ENCODE measurements at regions of chr3 and their contacts with region 1.

Region 1: DNA sequence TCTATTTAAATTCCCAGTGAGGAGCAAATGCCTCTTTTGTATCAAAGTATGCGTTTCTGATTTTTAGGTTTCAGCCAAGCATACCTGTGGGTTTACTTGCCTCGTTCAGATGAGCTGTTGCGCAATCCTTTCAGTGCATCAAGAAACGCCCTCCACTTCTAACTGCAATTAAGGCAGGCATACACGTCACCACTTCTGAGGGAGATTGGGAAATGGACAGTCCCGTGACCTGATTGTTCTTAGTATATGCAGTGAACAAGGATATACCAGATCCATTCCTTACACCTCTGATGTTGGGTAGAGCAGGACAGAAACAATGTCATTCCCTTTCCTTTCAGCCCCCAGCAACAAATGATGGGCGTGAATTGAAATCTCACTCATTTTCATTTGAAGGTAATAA is 219.0 kb downstream of the ITPR1 start:
- DNase-seq: no peak
- H3K4me3 ChIP-seq: no peak overlapping the region
- H3K4me3 Mint-ChIP-seq: no peak overlapping the region
- H3K27ac ChIP-seq: no peak overlapping the region
- H3K27ac Mint-ChIP-seq: no peak overlapping the region
- H3K4me1 ChIP-seq: no peaks in the 10 kb centered on the region
- H3K4me1 Mint-ChIP-seq: peaks cover 0 to 5% (median under 1%) of the 10 kb centered on the region in 4 donors
- H3K27me3 ChIP-seq: no peaks in the 10 kb centered on the region
- H3K27me3 Mint-ChIP-seq: no peaks in the 10 kb centered on the region

Region 2: GRCh38 chr3:4601892-4602291 is 110.3 kb before region 1 on chr3:
- CTCF ChIA-PET with region 1: no interaction called
- POLR2A ChIA-PET with region 1: no interaction called
- intact Hi-C with region 1: no loop called
- DNase-seq: no peak
- H3K4me3 ChIP-seq: no peak overlapping the region
- H3K4me3 Mint-ChIP-seq: no peak overlapping the region
- H3K27ac ChIP-seq: no peak overlapping the region
- H3K27ac Mint-ChIP-seq: no peak overlapping the region
- H3K4me1 ChIP-seq: no peaks in the 10 kb centered on the region
- H3K4me1 Mint-ChIP-seq: peaks cover 16 to 31% (median 20%) of the 10 kb centered on the region in 4 donors
- H3K27me3 ChIP-seq: no peaks in the 10 kb centered on the region
- H3K27me3 Mint-ChIP-seq: no peaks in the 10 kb centered on the region

Region 3: GRCh38 chr3:4736284-4736861 is 24.2 kb after region 1 on chr3:
- CTCF ChIA-PET with region 1: interaction called, 27 read pairs
- POLR2A ChIA-PET with region 1: no interaction called
- intact Hi-C with region 1: no loop called
- DNase-seq: no peak
- H3K4me3 ChIP-seq: no peak overlapping the region
- H3K4me3 Mint-ChIP-seq: peak overlapping the region in 5 of 8 donors; percentile 9 to 71 (median 39)
- H3K27ac ChIP-seq: no peak overlapping the region
- H3K27ac Mint-ChIP-seq: peak overlapping the region; percentile 0 to 88 (median 74)
- H3K4me1 ChIP-seq: peaks cover 54% of the 10 kb centered on the region
- H3K4me1 Mint-ChIP-seq: peaks cover 50 to 69% (median 52%) of the 10 kb centered on the region in 4 donors
- H3K27me3 ChIP-seq: no peaks in the 10 kb centered on the region
- H3K27me3 Mint-ChIP-seq: no peaks in the 10 kb centered on the region

Region 4: GRCh38 chr3:4758957-4759656 is 47.0 kb after region 1 on chr3:
- CTCF ChIA-PET with region 1: no interaction called
- POLR2A ChIA-PET with region 1: no interaction called
- intact Hi-C with region 1: no loop called
- DNase-seq: no peak
- H3K4me3 ChIP-seq: no peak overlapping the region
- H3K4me3 Mint-ChIP-seq: no peak overlapping the region
- H3K27ac ChIP-seq: no peak overlapping the region
- H3K27ac Mint-ChIP-seq: no peak overlapping the region
- H3K4me1 ChIP-seq: peaks cover 9% of the 10 kb centered on the region
- H3K4me1 Mint-ChIP-seq: peaks cover 0 to 8% (median 2%) of the 10 kb centered on the region in 4 donors
- H3K27me3 ChIP-seq: no peaks in the 10 kb centered on the region
- H3K27me3 Mint-ChIP-seq: no peaks in the 10 kb centered on the region

Region 5: DNA sequence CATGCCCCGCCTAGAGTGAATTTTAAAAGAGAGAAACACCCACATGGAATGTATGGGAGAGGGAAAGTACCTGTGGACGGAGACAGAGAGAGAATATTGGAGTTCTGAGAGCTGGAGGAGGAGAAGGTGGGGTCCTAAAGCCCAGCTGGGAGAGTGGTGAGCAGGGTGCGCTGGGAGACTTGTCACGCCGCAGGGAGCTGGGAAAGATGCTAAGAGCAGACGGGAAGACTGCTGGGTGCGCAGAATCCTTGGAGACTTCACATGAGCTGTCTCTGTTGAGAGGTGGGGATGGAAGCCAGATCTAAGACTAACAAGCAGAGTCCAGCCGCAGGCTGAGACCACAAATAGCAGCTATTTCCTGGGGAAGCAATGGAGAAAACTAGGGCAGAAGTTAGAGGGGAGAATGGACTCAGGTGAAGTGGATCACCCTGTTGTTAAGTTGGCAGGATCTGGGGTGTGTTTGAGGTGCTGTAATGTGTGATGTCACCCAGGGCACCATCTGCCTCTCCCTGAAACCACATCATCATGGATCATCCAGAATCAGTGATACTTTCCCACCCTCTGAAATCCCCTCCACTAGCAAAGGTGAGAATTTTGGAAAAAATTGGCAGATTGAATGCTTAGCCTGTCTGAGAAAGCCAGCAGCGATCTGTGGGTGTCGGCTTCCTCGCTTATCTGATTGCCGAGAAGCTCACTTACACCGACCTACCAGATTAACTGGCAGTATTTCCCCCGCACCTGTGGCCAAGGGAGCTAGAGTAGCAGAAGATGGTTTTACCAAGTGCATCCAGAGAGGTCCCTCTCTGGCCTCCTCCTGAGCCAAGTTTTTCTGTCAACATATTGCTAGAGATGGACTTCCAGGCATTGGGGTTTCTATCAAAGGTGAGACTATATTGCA is 92.3 kb after region 1 on chr3:
- CTCF ChIA-PET with region 1: interaction called, 13 read pairs
- POLR2A ChIA-PET with region 1: no interaction called
- intact Hi-C with region 1: no loop called
- DNase-seq: peak in 3 of 5 donors; percentile 15 to 54 (median 34)
- H3K4me3 ChIP-seq: no peak overlapping the region
- H3K4me3 Mint-ChIP-seq: peak overlapping the region; percentile 21 to 54 (median 48)
- H3K27ac ChIP-seq: no peak overlapping the region
- H3K27ac Mint-ChIP-seq: peak overlapping the region; percentile 10 to 92 (median 71)
- H3K4me1 ChIP-seq: peaks cover 16% of the 10 kb centered on the region
- H3K4me1 Mint-ChIP-seq: peaks cover 28 to 52% (median 34%) of the 10 kb centered on the region in 4 donors
- H3K27me3 ChIP-seq: no peaks in the 10 kb centered on the region
- H3K27me3 Mint-ChIP-seq: no peaks in the 10 kb centered on the region

Region 6: GRCh38 chr3:4986782-4987537 is 274.8 kb after region 1 on chr3:
- CTCF ChIA-PET with region 1: interaction called, 49 read pairs
- POLR2A ChIA-PET with region 1: interaction called, 5 read pairs
- intact Hi-C with region 1: no loop called
- DNase-seq: peak; percentile 62 to 79 (median 70)
- H3K4me3 ChIP-seq: peak overlapping the region; percentile 44 to 65
- H3K4me3 Mint-ChIP-seq: peak overlapping the region; percentile 86 to 93 (median 90)
- H3K27ac ChIP-seq: peak overlapping the region; percentile 59
- H3K27ac Mint-ChIP-seq: peak overlapping the region; percentile 95 to 98 (median 97)
- H3K4me1 ChIP-seq: peaks cover 58% of the 10 kb centered on the region
- H3K4me1 Mint-ChIP-seq: peaks cover 34 to 50% (median 43%) of the 10 kb centered on the region in 4 donors
- H3K27me3 ChIP-seq: no peaks in the 10 kb centered on the region
- H3K27me3 Mint-ChIP-seq: no peaks in the 10 kb centered on the region

Region 7: GRCh38 chr3:5026331-5027218 is 314.4 kb after region 1 on chr3:
- CTCF ChIA-PET with region 1: interaction called, 221 read pairs
- POLR2A ChIA-PET with region 1: interaction called, 5 read pairs
- intact Hi-C with region 1: loop called (anchors 1 kb)
- DNase-seq: peak; percentile 54 to 77 (median 57)
- H3K4me3 ChIP-seq: peak overlapping the region in 1 of 2 donors; percentile 71
- H3K4me3 Mint-ChIP-seq: peak overlapping the region; percentile 85 to 93 (median 87)
- H3K27ac ChIP-seq: peak overlapping the region; percentile 50
- H3K27ac Mint-ChIP-seq: peak overlapping the region; percentile 81 to 97 (median 93)
- H3K4me1 ChIP-seq: peaks cover 13% of the 10 kb centered on the region
- H3K4me1 Mint-ChIP-seq: peaks cover 15 to 35% (median 23%) of the 10 kb centered on the region in 4 donors
- H3K27me3 ChIP-seq: no peaks in the 10 kb centered on the region
- H3K27me3 Mint-ChIP-seq: no peaks in the 10 kb centered on the region

Region 8: GRCh38 chr3:5057857-5058324 is 345.7 kb after region 1 on chr3:
- CTCF ChIA-PET with region 1: interaction called, 306 read pairs
- POLR2A ChIA-PET with region 1: interaction called, 4 read pairs
- intact Hi-C with region 1: loop called (anchors 1 kb)
- DNase-seq: peak; percentile 66 to 82 (median 70)
- H3K4me3 ChIP-seq: no peak overlapping the region
- H3K4me3 Mint-ChIP-seq: no peak overlapping the region
- H3K27ac ChIP-seq: no peak overlapping the region
- H3K27ac Mint-ChIP-seq: no peak overlapping the region
- H3K4me1 ChIP-seq: peaks cover 3% of the 10 kb centered on the region
- H3K4me1 Mint-ChIP-seq: peaks cover 0 to 4% (median 1%) of the 10 kb centered on the region in 4 donors
- H3K27me3 ChIP-seq: no peaks in the 10 kb centered on the region
- H3K27me3 Mint-ChIP-seq: peaks cover 1% of the 10 kb centered on the region in 2 donors

Region 9: GRCh38 chr3:5136211-5136918 is 424.2 kb after region 1 on chr3:
- CTCF ChIA-PET with region 1: no interaction called
- POLR2A ChIA-PET with region 1: no interaction called
- intact Hi-C with region 1: no loop called
- DNase-seq: peak; percentile 49 to 67 (median 62)
- H3K4me3 ChIP-seq: no peak overlapping the region
- H3K4me3 Mint-ChIP-seq: peak overlapping the region in 2 of 8 donors; percentile 0 to 51
- H3K27ac ChIP-seq: no peak overlapping the region
- H3K27ac Mint-ChIP-seq: peak overlapping the region; percentile 9 to 74 (median 47)
- H3K4me1 ChIP-seq: peaks cover 49% of the 10 kb centered on the region
- H3K4me1 Mint-ChIP-seq: peaks cover 47 to 73% (median 62%) of the 10 kb centered on the region in 4 donors
- H3K27me3 ChIP-seq: no peaks in the 10 kb centered on the region
- H3K27me3 Mint-ChIP-seq: no peaks in the 10 kb centered on the region

Measured in CD4-positive, alpha-beta memory T cell (primary cell).